ENCODE measurements at regions of chr7 and their contacts with region 1.

Region 1: GRCh38 chr7:116236020-116236630 is 25.8 kb downstream of the TES start:
- DNase-seq: peak; percentile 51
- ATAC-seq: peak; percentile 47; the same call in 1 of the 3 replicates
- H3K4me3 ChIP-seq: no peak overlapping the region
- H3K27ac ChIP-seq: no peak overlapping the region
- H3K4me1 ChIP-seq: peaks cover 39% of the 10 kb centered on the region
- H3K27me3 ChIP-seq: no peaks in the 10 kb centered on the region
- CTCF ChIP-seq: peak; percentile 60
- EP300 ChIP-seq: no peak
- POLR2A ChIP-seq: no peak
- RAD21 ChIP-seq: peak; percentile 37; the same call in 1 of the 2 replicates

Region 2: DNA sequence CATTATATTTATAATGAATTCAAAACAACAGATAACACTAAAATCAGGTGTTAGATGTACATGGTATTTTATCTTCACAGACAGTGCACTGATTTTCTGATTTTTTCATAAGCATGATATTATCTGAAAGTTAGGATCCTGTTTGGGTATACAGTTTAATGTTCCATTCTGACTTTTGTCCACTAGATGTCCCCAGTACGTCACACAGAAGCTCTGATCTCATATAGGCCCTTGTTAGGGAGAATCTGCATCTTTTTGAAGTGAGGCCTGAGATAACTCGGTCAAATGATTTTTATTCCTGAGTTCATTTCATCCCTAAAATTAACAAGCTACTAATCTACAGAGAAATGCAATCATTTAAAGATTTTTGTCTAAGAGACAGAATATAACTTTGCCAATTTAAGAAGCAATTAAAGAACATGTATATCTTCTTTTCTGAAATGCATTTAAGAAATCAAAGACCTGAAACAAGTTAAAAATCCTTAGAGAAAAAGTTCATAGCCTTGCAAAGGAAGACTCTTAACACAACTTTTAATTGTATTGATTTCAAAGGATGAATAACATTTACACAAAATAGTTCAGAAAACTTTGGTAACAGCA is 97.8 kb before region 1 on chr7:
- CTCF ChIA-PET with region 1: interaction called, 23 read pairs
- POLR2A ChIA-PET with region 1: no interaction called
- in situ Hi-C with region 1: no loop called
- intact Hi-C with region 1: loop called (anchors 1 kb)
- DNase-seq: peak; percentile 52
- ATAC-seq: peak; percentile 90
- H3K4me3 ChIP-seq: no peak overlapping the region
- H3K27ac ChIP-seq: no peak overlapping the region
- H3K4me1 ChIP-seq: peaks cover 13% of the 10 kb centered on the region
- H3K27me3 ChIP-seq: 0 out of 5 replicates have a peak, but pooled peaks cover 2 to 3% of the 10 kb centered on the region in 2 experiments
- CTCF ChIP-seq: peak; percentile 81
- EP300 ChIP-seq: no peak
- POLR2A ChIP-seq: no peak
- RAD21 ChIP-seq: peak; percentile 43; the same call in 1 of the 2 replicates

Region 3: GRCh38 chr7:116165717-116166116 is 70.4 kb before region 1 on chr7:
- CTCF ChIA-PET with region 1: interaction called, 4 read pairs
- POLR2A ChIA-PET with region 1: no interaction called
- in situ Hi-C with region 1: loop called (anchors 5 kb)
- intact Hi-C with region 1: loop called (anchors 1 kb)
- DNase-seq: no peak
- ATAC-seq: no peak
- H3K4me3 ChIP-seq: no peak overlapping the region
- H3K27ac ChIP-seq: no peak overlapping the region
- H3K4me1 ChIP-seq: peaks cover 31% of the 10 kb centered on the region
- H3K27me3 ChIP-seq: peaks cover 4 to 23% of the 10 kb centered on the region in 2 experiments; a peak in 3 of 5 replicates
- CTCF ChIP-seq: no peak
- EP300 ChIP-seq: no peak
- POLR2A ChIP-seq: no peak
- RAD21 ChIP-seq: no peak

Region 4: GRCh38 chr7:116173051-116174028 is 62.8 kb before region 1 on chr7:
- CTCF ChIA-PET with region 1: interaction called, 8 read pairs
- POLR2A ChIA-PET with region 1: no interaction called
- in situ Hi-C with region 1: loop called (anchors 5 kb)
- intact Hi-C with region 1: loop called (anchors 1 kb)
- DNase-seq: peak; percentile 77
- ATAC-seq: peak; percentile 57
- H3K4me3 ChIP-seq: no peak overlapping the region
- H3K27ac ChIP-seq: no peak overlapping the region
- H3K4me1 ChIP-seq: peaks cover 48% of the 10 kb centered on the region
- H3K27me3 ChIP-seq: peaks cover 0 to 28% of the 10 kb centered on the region in 2 experiments; a peak in 4 of 5 replicates
- CTCF ChIP-seq: peak; percentile 67
- EP300 ChIP-seq: peak in 1 of 2 experiments; percentile 66; a peak in 2 of 4 replicates
- POLR2A ChIP-seq: no peak
- RAD21 ChIP-seq: no peak; the same call in 1 of the 2 replicates

Region 5: GRCh38 chr7:116180302-116180701 is 55.8 kb before region 1 on chr7:
- CTCF ChIA-PET with region 1: interaction called, 26 read pairs
- POLR2A ChIA-PET with region 1: no interaction called
- in situ Hi-C with region 1: no loop called
- intact Hi-C with region 1: loop called (anchors 1 kb)
- DNase-seq: peak; percentile 31
- ATAC-seq: peak; percentile 74
- H3K4me3 ChIP-seq: no peak overlapping the region
- H3K27ac ChIP-seq: no peak overlapping the region
- H3K4me1 ChIP-seq: no peaks in the 10 kb centered on the region
- H3K27me3 ChIP-seq: peaks cover 0 to 15% of the 10 kb centered on the region in 2 experiments; a peak in 2 of 5 replicates
- CTCF ChIP-seq: peak; percentile 71
- EP300 ChIP-seq: no peak
- POLR2A ChIP-seq: no peak
- RAD21 ChIP-seq: peak; percentile 28; the same call in 1 of the 2 replicates

Region 6: GRCh38 chr7:116211006-116211912 is 24.9 kb before region 1 on chr7:
- CTCF ChIA-PET with region 1: no interaction called
- POLR2A ChIA-PET with region 1: interaction called, 6 read pairs
- in situ Hi-C with region 1: no loop called
- intact Hi-C with region 1: loop called (anchors 2 kb)
- DNase-seq: peak; percentile 66
- ATAC-seq: peak; percentile 84
- H3K4me3 ChIP-seq: peak overlapping the region; percentile 68 to 72 (median 71)
- H3K27ac ChIP-seq: peak overlapping the region; percentile 46
- H3K4me1 ChIP-seq: peaks cover 27% of the 10 kb centered on the region
- H3K27me3 ChIP-seq: peaks cover 0 to 12% of the 10 kb centered on the region in 2 experiments; a peak in 2 of 5 replicates
- CTCF ChIP-seq: no peak
- EP300 ChIP-seq: no peak
- POLR2A ChIP-seq: peak; percentile 27 to 56; a peak in 3 of 4 replicates
- RAD21 ChIP-seq: no peak

Region 7: DNA sequence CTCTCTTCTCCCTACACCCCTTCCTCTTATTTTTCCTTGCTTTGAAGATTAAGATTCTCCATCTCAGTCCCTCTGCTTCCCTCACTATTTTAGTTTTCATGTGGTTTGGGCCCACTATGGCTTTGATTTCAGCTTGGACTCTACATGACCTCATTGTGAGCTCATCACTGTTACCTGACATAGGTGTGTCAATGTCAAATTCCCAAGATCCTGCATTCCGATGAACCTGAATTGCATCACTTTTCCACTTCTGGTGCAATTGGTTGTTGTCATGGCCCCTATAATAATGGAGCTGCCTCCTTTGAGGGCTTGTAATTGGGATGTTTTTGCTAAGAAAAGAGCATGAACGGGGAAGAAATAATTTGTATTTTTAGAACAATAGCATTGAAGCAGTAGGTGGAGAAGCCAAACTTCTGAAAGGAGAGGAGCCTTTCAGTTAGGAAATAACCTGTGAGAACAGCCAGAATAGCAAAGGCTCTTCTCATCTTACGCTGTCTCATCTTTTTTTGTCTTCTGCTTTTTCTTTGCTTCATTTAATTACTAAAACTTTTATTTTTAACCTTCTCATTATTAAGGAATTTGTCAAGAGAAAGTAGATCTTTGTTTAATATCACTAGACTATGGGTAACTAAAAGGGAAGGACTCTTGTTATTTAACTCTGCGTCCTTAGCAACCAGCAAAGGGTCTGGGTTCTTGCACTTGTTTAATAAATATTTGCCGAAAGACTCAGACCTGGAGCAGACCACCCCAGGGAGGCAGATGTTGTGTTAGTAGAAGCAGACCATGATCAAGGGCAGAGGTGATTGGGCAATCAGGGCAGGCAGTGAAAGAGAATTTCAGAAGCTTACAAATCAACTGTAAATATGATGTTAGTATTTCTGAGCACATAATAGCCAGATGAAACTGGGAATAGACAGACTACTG is 69.6 kb after region 1 on chr7:
- CTCF ChIA-PET with region 1: no interaction called
- POLR2A ChIA-PET with region 1: no interaction called
- in situ Hi-C with region 1: no loop called
- intact Hi-C with region 1: no loop called
- DNase-seq: peak; percentile 88
- ATAC-seq: peak; percentile 100
- H3K4me3 ChIP-seq: no peak overlapping the region
- H3K27ac ChIP-seq: peak overlapping the region; percentile 21
- H3K4me1 ChIP-seq: peaks cover 16% of the 10 kb centered on the region
- H3K27me3 ChIP-seq: no peaks in the 10 kb centered on the region
- CTCF ChIP-seq: no peak
- EP300 ChIP-seq: peak; percentile 64; a peak in 2 of 4 replicates
- POLR2A ChIP-seq: no peak
- RAD21 ChIP-seq: no peak

Region 8: GRCh38 chr7:116348331-116348730 is 112.2 kb after region 1 on chr7:
- CTCF ChIA-PET with region 1: no interaction called
- POLR2A ChIA-PET with region 1: no interaction called
- in situ Hi-C with region 1: no loop called
- intact Hi-C with region 1: no loop called
- DNase-seq: no peak
- ATAC-seq: no peak
- H3K4me3 ChIP-seq: no peak overlapping the region
- H3K27ac ChIP-seq: no peak overlapping the region
- H3K4me1 ChIP-seq: no peaks in the 10 kb centered on the region
- H3K27me3 ChIP-seq: no peaks in the 10 kb centered on the region; a peak in 2 of 5 replicates
- CTCF ChIP-seq: no peak
- EP300 ChIP-seq: no peak
- POLR2A ChIP-seq: no peak
- RAD21 ChIP-seq: no peak